ENCODE measurements at regions of chr9 and their contacts with region 1.

Region 1: DNA sequence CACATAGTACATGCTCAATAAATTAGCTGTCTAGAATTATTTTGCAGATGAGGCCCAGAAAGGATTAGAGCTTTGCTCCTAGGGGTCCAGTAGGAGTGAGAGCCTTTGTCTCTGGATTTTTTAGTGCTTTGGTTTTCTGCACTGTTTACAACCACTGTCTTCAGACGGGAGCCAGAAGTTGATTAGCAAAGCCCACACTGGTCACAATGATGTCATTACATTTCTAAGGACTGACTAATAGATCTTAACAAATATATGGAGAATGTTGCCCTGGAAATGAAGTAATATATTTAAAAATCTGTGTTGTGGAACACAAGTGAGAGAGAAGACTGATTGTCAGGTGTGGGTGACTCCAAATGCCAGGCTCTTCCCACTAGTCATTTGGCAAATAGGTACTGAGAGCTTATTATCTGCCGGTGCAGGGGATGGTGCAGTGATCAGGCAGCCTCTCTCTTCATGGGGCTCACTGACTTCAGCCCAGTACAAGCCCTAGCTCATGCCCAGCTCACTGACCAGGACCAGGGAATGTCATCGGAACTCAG is 76.2 kb downstream of the COL15A1 start:
- DNase-seq: peak; percentile 88
- H3K4me3 ChIP-seq: no peak overlapping the region
- H3K27ac ChIP-seq: peak overlapping the region; percentile 60
- H3K4me1 ChIP-seq: peaks cover 11% of the 10 kb centered on the region
- H3K27me3 ChIP-seq: no peaks in the 10 kb centered on the region
- CTCF ChIP-seq: no peak

Region 2: GRCh38 chr9:99130069-99130468 is 110.2 kb after region 1 on chr9:
- CTCF ChIA-PET with region 1: no interaction called
- dilution Hi-C with region 1: no loop called
- in situ Hi-C with region 1: no loop called
- intact Hi-C with region 1: loop called (anchors 5 kb)
- DNase-seq: no peak
- H3K4me3 ChIP-seq: no peak overlapping the region
- H3K27ac ChIP-seq: no peak overlapping the region
- H3K4me1 ChIP-seq: peaks cover 58% of the 10 kb centered on the region
- H3K27me3 ChIP-seq: no peaks in the 10 kb centered on the region
- CTCF ChIP-seq: no peak

Region 3: GRCh38 chr9:100160021-100160420 is 1140.2 kb after region 1 on chr9:
- CTCF ChIA-PET with region 1: no interaction called
- dilution Hi-C with region 1: no loop called
- in situ Hi-C with region 1: no loop called
- intact Hi-C with region 1: no loop called
- DNase-seq: no peak
- H3K4me3 ChIP-seq: no peak overlapping the region
- H3K27ac ChIP-seq: no peak overlapping the region
- H3K4me1 ChIP-seq: no peaks in the 10 kb centered on the region
- H3K27me3 ChIP-seq: no peaks in the 10 kb centered on the region
- CTCF ChIP-seq: no peak